ENCODE measurements at regions of chr2 and their contacts with region 1.

Region 1: GRCh38 chr2:85516653-85517406 is 22.1 kb upstream of the MAT2A start:
- H3K4me3 Mint-ChIP-seq: peak overlapping the region; percentile 88
- H3K27ac Mint-ChIP-seq: peak overlapping the region; percentile 84
- H3K4me1 Mint-ChIP-seq: peaks cover 60% of the 10 kb centered on the region
- H3K27me3 Mint-ChIP-seq: no peaks in the 10 kb centered on the region

Region 2: DNA sequence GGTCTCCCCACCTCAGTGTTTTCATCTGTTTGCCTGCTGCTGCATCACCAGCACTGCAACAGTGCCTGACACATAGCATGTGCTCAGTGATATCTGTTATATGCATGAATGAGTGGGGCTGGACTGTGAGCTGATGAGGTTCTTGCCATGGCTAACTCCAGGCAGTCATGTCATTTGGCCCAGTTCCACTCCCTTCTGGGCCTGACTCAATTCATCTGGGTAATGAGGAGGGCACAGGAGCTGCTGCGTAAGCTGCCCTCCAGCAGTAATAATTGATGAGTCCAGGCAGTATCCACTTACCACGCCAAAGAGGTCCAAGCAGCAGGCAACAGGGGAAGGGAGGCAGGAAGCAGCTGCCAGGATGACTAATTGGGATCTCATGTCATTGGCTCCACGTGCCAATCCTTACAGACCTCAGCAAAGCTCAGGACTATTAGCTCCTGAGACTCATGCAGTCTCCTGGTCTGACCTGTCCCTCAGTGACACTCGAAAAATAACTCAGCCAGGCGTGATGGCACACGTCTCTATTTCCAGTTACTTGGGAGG is 12.0 kb before region 1 on chr2:
- intact Hi-C with region 1: loop called (anchors 2 kb)
- H3K4me3 Mint-ChIP-seq: no peak overlapping the region
- H3K27ac Mint-ChIP-seq: peak overlapping the region; percentile 86
- H3K4me1 Mint-ChIP-seq: peaks cover 89% of the 10 kb centered on the region
- H3K27me3 Mint-ChIP-seq: no peaks in the 10 kb centered on the region

Measured in dendritic cell treated with granulocyte-macrophage colony-stimulating factor and Interleukin-4, amounts not matched to agents 40 ng/mL and 50 ng/mL, for 4 days (primary cell).